Transverse colon (tissue), 4 donors: ENCODE measurements at regions of chr7 and their contacts with region 1.

Region 1: GRCh38 chr7:42359946-42360345 is 122.9 kb upstream of the GLI3 start:
- DNase-seq: no peak
- H3K4me3 ChIP-seq: no peak overlapping the region
- H3K27ac ChIP-seq: no peak overlapping the region
- H3K4me1 ChIP-seq: no peaks in the 10 kb centered on the region
- H3K27me3 ChIP-seq: no peaks in the 10 kb centered on the region
- CTCF ChIP-seq: no peak
- EP300 ChIP-seq: no peak
- POLR2A ChIP-seq: no peak

Region 2: GRCh38 chr7:42348631-42349030 is 11.3 kb before region 1 on chr7:
- in situ Hi-C with region 1: no loop called
- intact Hi-C with region 1: no loop called
- DNase-seq: no peak
- H3K4me3 ChIP-seq: no peak overlapping the region
- H3K27ac ChIP-seq: peak overlapping the region in 1 of 4 donors; percentile 2
- H3K4me1 ChIP-seq: peaks cover 0 to 6% (median 2%) of the 10 kb centered on the region in 4 donors
- H3K27me3 ChIP-seq: no peaks in the 10 kb centered on the region
- CTCF ChIP-seq: no peak
- EP300 ChIP-seq: no peak
- POLR2A ChIP-seq: no peak

Region 3: DNA sequence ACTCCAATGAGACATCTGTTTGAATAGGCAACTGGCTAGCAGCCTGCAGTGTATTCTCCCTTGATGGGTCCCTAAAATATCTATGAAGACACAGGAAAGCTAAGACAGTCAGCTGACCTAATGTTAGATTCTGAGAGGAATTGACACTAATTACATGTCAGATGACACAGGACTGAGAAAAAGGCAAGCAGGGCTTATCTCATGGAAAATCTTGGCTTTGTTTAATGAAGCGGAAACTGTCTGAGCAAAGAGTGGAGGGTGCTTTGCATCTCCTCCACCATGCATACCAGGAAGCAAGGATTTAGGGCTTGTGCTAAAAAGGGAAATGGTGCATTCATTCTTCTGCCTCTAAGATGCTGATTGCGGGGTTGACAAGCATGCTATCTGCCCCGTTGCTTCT is 12.5 kb after region 1 on chr7:
- in situ Hi-C with region 1: no loop called
- intact Hi-C with region 1: loop called (anchors 1 kb)
- DNase-seq: no peak
- H3K4me3 ChIP-seq: no peak overlapping the region
- H3K27ac ChIP-seq: no peak overlapping the region
- H3K4me1 ChIP-seq: no peaks in the 10 kb centered on the region
- H3K27me3 ChIP-seq: no peaks in the 10 kb centered on the region
- CTCF ChIP-seq: no peak
- EP300 ChIP-seq: no peak
- POLR2A ChIP-seq: no peak

Region 4: GRCh38 chr7:42385912-42386311 is 26.0 kb after region 1 on chr7:
- in situ Hi-C with region 1: no loop called
- intact Hi-C with region 1: no loop called
- DNase-seq: no peak
- H3K4me3 ChIP-seq: no peak overlapping the region
- H3K27ac ChIP-seq: no peak overlapping the region
- H3K4me1 ChIP-seq: no peaks in the 10 kb centered on the region
- H3K27me3 ChIP-seq: no peaks in the 10 kb centered on the region
- CTCF ChIP-seq: no peak
- EP300 ChIP-seq: no peak
- POLR2A ChIP-seq: no peak